Colonic mucosa (tissue), 4 donors: ENCODE measurements at regions of chr1 and their contacts with region 1.

Region 1: DNA sequence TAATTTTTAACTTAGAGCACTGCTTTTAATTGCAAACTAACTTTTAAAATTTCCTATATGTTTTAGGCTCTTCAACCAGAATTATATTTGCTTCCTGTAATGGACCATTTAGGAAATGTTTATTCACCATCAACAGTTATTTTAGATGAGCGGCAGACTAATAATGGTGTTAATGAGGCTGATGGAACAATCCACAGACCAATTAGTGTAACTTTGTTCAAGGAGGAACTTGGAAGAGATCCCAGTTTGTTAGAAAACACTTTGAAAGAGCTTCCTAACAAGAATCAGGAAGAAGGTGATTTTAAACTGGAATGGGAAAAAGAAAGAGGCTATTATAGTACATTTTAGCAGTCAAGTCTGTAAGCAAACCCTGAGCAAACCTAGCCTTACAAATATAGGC is 19.4 kb upstream of the GNG5 start:
- DNase-seq: no peak
- H3K4me3 ChIP-seq: no peak overlapping the region
- H3K27ac ChIP-seq: no peak overlapping the region
- H3K4me1 ChIP-seq: no peaks in the 10 kb centered on the region
- H3K27me3 ChIP-seq: no peaks in the 10 kb centered on the region
- CTCF ChIP-seq: no peak

Region 2: GRCh38 chr1:84442256-84442655 is 83.5 kb before region 1 on chr1:
- intact Hi-C with region 1: loop called (anchors 10 kb)
- DNase-seq: no peak
- H3K4me3 ChIP-seq: no peak overlapping the region
- H3K27ac ChIP-seq: no peak overlapping the region
- H3K4me1 ChIP-seq: no peaks in the 10 kb centered on the region
- H3K27me3 ChIP-seq: no peaks in the 10 kb centered on the region
- CTCF ChIP-seq: peak; percentile 39

Region 3: DNA sequence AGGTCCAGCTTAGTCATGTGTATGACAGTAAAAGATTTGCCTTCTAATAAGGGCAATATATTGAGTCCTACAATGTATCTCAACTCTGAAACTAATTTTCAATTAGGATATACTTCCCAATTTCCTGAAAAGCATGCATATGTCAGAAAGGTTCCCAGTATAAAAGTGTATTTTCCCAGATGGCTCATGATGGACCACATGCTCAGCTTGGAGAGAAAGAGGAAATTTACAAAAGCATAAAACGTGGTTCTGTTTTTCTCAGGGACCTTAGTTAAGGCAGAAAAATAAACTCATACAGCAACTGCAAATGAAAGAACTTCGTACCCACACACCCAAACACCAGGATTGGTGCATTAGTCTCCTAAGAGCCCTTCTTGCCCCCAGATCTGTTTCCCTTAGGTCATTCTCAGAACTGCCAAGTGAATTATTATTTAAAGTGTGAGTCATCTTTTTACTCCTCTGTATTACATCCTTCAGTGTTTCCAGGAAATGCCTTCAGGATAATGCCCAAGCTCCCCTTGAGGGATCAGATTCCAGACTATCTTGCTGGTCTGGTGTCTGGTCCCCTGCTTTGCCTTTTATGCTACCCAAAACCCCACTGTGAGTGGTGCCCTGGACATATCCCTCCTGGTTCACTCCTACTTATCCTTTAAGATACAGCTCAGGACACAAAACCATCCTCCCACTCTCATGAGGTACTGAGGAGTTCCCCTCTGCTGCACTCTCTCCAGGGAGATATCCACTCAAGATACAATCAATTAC is 107.1 kb after region 1 on chr1:
- intact Hi-C with region 1: no loop called
- DNase-seq: peak; percentile 57
- H3K4me3 ChIP-seq: no peak overlapping the region
- H3K27ac ChIP-seq: peak overlapping the region; percentile 38
- H3K4me1 ChIP-seq: no peaks in the 10 kb centered on the region
- H3K27me3 ChIP-seq: no peaks in the 10 kb centered on the region
- CTCF ChIP-seq: no peak